ENCODE measurements at regions of chr12 and their contacts with region 1.

Region 1: GRCh38 chr12:47837190-47838171 is 17.8 kb upstream of the HDAC7 start:
- DNase-seq: peak; percentile 68 to 84 (median 80)
- ATAC-seq: peak; percentile 56 to 70
- H3K4me3 ChIP-seq: no peak overlapping the region
- H3K27ac ChIP-seq: no peak overlapping the region
- H3K4me1 ChIP-seq: no peaks in the 10 kb centered on the region
- H3K27me3 ChIP-seq: no peaks in the 10 kb centered on the region

Region 2: GRCh38 chr12:47715393-47715876 is 122.0 kb before region 1 on chr12:
- intact Hi-C with region 1: loop called (anchors 2 to 5 kb)
- DNase-seq: peak; percentile 79 to 85 (median 81)
- ATAC-seq: peak; percentile 58 to 60
- H3K4me3 ChIP-seq: no peak overlapping the region
- H3K27ac ChIP-seq: peak overlapping the region; percentile 82
- H3K4me1 ChIP-seq: peaks cover 30% of the 10 kb centered on the region
- H3K27me3 ChIP-seq: no peaks in the 10 kb centered on the region

Region 3: GRCh38 chr12:47779301-47779942 is 58.1 kb before region 1 on chr12:
- intact Hi-C with region 1: loop called (anchors 2 to 10 kb)
- DNase-seq: peak; percentile 84 to 95 (median 95)
- ATAC-seq: peak; percentile 68 to 69
- H3K4me3 ChIP-seq: no peak overlapping the region
- H3K27ac ChIP-seq: no peak overlapping the region
- H3K4me1 ChIP-seq: peaks cover 29% of the 10 kb centered on the region
- H3K27me3 ChIP-seq: no peaks in the 10 kb centered on the region

Region 4: DNA sequence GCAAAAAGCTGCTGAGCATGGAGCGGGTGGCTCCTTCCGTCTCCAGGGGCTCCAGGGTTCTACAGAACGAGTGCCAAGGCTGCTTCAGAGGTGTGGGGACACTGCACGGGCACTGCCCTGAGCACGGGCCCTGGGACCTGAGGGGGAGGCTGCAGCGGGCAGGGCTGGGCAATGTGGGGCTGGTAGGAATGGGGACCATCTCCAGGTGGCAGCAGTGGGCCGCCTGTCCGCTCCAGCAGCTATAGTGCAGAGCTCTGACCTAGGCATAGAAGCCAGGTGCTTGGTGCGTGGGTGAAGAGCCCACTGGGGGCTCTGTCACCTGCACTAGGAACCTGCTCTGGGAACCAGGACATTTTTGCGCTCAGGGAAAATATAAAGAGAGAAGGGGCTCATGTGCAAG is 40.0 kb before region 1 on chr12:
- intact Hi-C with region 1: loop called (anchors 5 kb)
- DNase-seq: peak in 2 of 3 donors; percentile 50
- ATAC-seq: no peak
- H3K4me3 ChIP-seq: no peak overlapping the region
- H3K27ac ChIP-seq: no peak overlapping the region
- H3K4me1 ChIP-seq: peaks cover 31% of the 10 kb centered on the region
- H3K27me3 ChIP-seq: no peaks in the 10 kb centered on the region

Region 5: GRCh38 chr12:48924617-48925303 is 1087.3 kb after region 1 on chr12:
- intact Hi-C with region 1: no loop called
- DNase-seq: peak; percentile 55 to 78 (median 77)
- ATAC-seq: peak; percentile 73 to 74
- H3K4me3 ChIP-seq: peak overlapping the region; percentile 56
- H3K27ac ChIP-seq: no peak overlapping the region
- H3K4me1 ChIP-seq: no peaks in the 10 kb centered on the region
- H3K27me3 ChIP-seq: no peaks in the 10 kb centered on the region